Activated CD4-positive, alpha-beta memory T cell treated with anti-CD3 and anti-CD28 coated beads, Interleukin-2, amount 10 ng/mL, durations not matched to agents 7 days and 5 days (primary cell): ENCODE measurements at regions of chr12 and their contacts with region 1.

Region 1: GRCh38 chr12:123232807-123233543 is at the starts of genes MPHOSPH9 and MTRFR:
- DNase-seq: peak; percentile 99
- H3K4me3 Mint-ChIP-seq: peak within 1 kb of the TSS; percentile 94
- H3K27ac Mint-ChIP-seq: peak within 1 kb of the TSS; percentile 97
- H3K4me1 Mint-ChIP-seq: peaks cover 76% of the 10 kb centered on the region
- H3K27me3 Mint-ChIP-seq: no peaks in the 10 kb centered on the region
- total RNA-seq, gene MPHOSPH9: 113 to 116 TPM
- total RNA-seq, gene MTRFR: 29.9 to 30.0 TPM

Region 2: DNA sequence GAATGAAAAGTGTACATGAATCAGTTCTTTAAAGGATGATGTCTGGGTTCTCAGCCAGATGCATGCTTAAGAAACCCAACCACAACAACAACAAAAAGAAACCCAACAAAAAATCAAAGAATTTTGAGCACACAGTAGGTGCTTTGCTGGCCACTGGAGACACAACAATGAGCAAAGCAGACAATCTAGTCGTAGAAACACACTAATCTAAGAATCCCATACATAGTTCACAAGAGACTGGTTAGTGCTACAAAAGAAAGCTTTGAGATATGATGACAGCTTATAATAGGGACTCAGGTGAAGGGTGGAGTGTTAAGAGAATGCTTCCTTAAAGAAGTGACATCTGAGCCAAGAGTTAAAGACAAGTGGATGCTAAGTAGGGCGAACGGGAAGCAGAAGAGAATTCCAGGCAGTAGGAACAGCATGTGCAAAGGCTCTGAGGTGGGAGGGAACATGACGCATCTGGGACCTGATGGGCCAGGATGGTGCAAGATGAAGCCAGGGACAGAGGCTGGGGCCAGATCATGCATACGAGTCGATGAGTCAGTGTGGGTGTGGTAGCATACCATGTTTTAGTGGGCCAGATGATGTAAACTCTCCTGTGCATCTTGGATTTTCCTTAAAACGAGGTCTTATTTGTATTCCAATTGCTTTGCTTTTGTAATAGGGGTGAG is 402.3 kb before region 1 on chr12:
- CTCF ChIA-PET with region 1: no interaction called
- POLR2A ChIA-PET with region 1: no interaction called
- DNase-seq: no peak
- H3K4me3 Mint-ChIP-seq: no peak overlapping the region
- H3K27ac Mint-ChIP-seq: no peak overlapping the region
- H3K4me1 Mint-ChIP-seq: peaks cover 15% of the 10 kb centered on the region
- H3K27me3 Mint-ChIP-seq: peaks cover 35% of the 10 kb centered on the region

Region 3: DNA sequence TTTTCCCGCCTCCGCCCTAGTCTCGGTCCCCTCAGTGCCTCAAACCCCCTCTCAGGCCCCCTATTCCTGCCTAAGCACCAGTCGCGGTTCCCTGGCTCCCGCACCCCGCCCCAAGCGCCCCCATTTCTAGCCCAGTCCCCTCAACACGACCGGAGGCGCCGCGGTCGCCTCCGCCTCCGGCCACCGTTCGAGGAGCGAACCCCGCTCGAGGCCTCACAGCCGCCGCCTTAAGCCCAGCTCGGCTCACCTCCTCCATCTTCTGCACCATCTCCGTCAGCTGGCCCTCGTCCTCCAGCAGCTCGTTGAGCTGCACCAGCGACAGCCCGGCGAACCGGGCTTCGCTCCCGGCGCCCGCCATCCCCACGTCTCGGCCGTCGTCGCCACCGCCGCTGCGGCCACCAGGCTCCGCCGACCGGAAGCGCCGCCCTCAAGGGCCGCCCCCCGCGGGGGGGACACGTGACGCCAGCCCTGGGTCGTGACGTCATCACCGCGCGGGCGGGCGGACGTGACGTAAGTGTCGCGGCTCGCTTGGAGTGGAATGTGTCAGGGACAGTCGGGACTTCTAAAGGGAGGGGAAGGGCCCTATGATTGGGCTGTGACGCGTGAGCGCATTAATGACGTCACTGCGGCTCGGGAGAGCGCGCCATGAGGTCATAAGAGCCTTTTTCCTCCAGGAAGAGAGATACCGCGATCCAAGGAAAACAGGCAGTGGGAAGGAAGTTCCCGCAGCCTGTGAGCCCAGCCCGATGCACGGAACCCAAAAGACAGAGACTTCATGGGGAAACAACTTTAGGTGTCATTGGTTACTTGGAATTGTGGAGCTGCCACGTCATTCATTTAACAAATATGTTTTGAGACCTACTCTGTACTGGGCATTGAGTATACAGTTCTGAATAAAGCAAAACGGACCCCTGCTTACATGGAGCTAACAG is 337.0 kb before region 1 on chr12 and contains the start of gene VPS37B:
- CTCF ChIA-PET with region 1: interaction called, 3 read pairs
- POLR2A ChIA-PET with region 1: interaction called, 10 read pairs
- DNase-seq: peak; percentile 92
- H3K4me3 Mint-ChIP-seq: peak within 1 kb of the TSS; percentile 83
- H3K27ac Mint-ChIP-seq: peak within 1 kb of the TSS; percentile 70
- H3K4me1 Mint-ChIP-seq: peaks cover 86% of the 10 kb centered on the region
- H3K27me3 Mint-ChIP-seq: no peaks in the 10 kb centered on the region
- total RNA-seq, gene VPS37B: 27.1 to 27.7 TPM

Region 4: DNA sequence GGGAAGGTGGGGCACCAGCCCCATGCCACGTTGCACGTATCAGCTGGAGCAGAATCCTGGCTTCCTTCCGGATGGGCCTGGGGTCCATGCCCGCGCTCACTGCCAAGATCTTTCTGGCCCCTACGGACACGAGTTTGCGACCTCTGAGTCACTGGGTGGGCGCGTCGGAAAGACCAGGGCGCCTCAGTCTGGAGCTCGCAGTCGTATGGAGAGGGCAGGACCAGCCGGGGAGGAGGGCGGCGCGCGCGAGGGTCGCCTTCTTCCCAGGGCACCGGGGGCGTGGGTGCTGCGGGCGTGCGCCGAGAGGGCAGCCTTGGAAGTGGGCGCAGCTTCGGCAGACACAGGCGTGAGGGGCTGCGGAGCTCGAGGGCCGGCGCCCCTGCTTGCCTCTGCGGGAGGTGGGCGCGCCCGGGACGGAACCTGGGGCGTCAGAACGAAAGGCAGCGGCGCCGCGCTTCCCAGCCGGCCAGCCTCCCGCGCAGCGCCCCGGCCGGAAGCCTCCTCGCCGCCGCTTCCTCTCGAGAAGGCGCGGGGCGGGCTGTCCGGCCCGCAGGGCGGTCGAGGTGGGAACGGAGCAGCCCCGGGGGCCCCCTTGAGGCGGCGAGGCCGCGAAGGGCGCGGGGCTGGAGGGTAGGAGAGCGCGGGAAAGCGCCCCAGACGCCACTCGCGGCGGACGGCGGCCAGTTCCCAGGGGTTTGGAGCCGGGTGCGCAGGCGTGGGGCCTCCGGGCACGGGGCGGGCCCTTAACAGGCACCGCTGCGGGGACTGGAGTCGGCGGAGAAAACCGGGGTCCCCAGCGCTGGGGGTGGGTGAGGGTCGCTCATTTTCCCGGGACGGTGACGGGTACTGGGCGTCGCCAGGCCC is 252.6 kb before region 1 on chr12 and contains the start of gene ARL6IP4:
- CTCF ChIA-PET with region 1: interaction called, 12 read pairs
- POLR2A ChIA-PET with region 1: interaction called, 46 read pairs
- DNase-seq: peak; percentile 74
- H3K4me3 Mint-ChIP-seq: peak within 1 kb of the TSS; percentile 86
- H3K27ac Mint-ChIP-seq: peak within 1 kb of the TSS; percentile 78
- H3K4me1 Mint-ChIP-seq: peaks cover 76% of the 10 kb centered on the region
- H3K27me3 Mint-ChIP-seq: no peaks in the 10 kb centered on the region
- total RNA-seq, gene ARL6IP4: 166 to 175 TPM

Region 5: GRCh38 chr12:123085730-123086487 is 147.1 kb before region 1 on chr12:
- CTCF ChIA-PET with region 1: no interaction called
- POLR2A ChIA-PET with region 1: no interaction called
- DNase-seq: no peak
- H3K4me3 Mint-ChIP-seq: no peak overlapping the region
- H3K27ac Mint-ChIP-seq: no peak overlapping the region
- H3K4me1 Mint-ChIP-seq: peaks cover 9% of the 10 kb centered on the region
- H3K27me3 Mint-ChIP-seq: peaks cover 4% of the 10 kb centered on the region

Region 6: GRCh38 chr12:123150744-123151456 is 82.1 kb before region 1 on chr12 and contains the start of gene PITPNM2:
- CTCF ChIA-PET with region 1: interaction called, 6 read pairs
- POLR2A ChIA-PET with region 1: interaction called, 12 read pairs
- DNase-seq: peak; percentile 64
- H3K4me3 Mint-ChIP-seq: peak within 1 kb of the TSS; percentile 74
- H3K27ac Mint-ChIP-seq: peak within 1 kb of the TSS; percentile 54
- H3K4me1 Mint-ChIP-seq: peaks cover 16% of the 10 kb centered on the region
- H3K27me3 Mint-ChIP-seq: peaks cover 22% of the 10 kb centered on the region
- total RNA-seq, gene PITPNM2: 8.1 to 9.3 TPM

Region 7: GRCh38 chr12:123365025-123365917 is 132.3 kb after region 1 on chr12:
- CTCF ChIA-PET with region 1: interaction called, 3 read pairs
- POLR2A ChIA-PET with region 1: interaction called, 35 read pairs
- DNase-seq: peak; percentile 98
- H3K4me3 Mint-ChIP-seq: peak overlapping the region; percentile 82
- H3K27ac Mint-ChIP-seq: peak overlapping the region; percentile 96
- H3K4me1 Mint-ChIP-seq: peaks cover 18% of the 10 kb centered on the region
- H3K27me3 Mint-ChIP-seq: no peaks in the 10 kb centered on the region

Region 8: GRCh38 chr12:123713398-123713797 is 480.4 kb after region 1 on chr12:
- CTCF ChIA-PET with region 1: no interaction called
- POLR2A ChIA-PET with region 1: interaction called, 14 read pairs
- DNase-seq: peak; percentile 22
- H3K4me3 Mint-ChIP-seq: peak overlapping the region; percentile 89
- H3K27ac Mint-ChIP-seq: peak overlapping the region; percentile 81
- H3K4me1 Mint-ChIP-seq: peaks cover 40% of the 10 kb centered on the region
- H3K27me3 Mint-ChIP-seq: no peaks in the 10 kb centered on the region

Region 9: GRCh38 chr12:123801573-123802178 is 568.7 kb after region 1 on chr12:
- CTCF ChIA-PET with region 1: no interaction called
- POLR2A ChIA-PET with region 1: no interaction called
- DNase-seq: no peak
- H3K4me3 Mint-ChIP-seq: no peak overlapping the region
- H3K27ac Mint-ChIP-seq: no peak overlapping the region
- H3K4me1 Mint-ChIP-seq: no peaks in the 10 kb centered on the region
- H3K27me3 Mint-ChIP-seq: no peaks in the 10 kb centered on the region